GM10248 (cell line): ENCODE measurements at regions of chr14 and their contacts with region 1.

Region 1: GRCh38 chr14:100056964-100057795 is 8.0 kb upstream of the EVL start:
- DNase-seq: peak; percentile 69
- CTCF ChIP-seq: peak; percentile 49

Region 2: GRCh38 chr14:100045642-100046312 is 11.4 kb before region 1 on chr14:
- CTCF ChIA-PET with region 1: interaction called, 10 read pairs
- POLR2A ChIA-PET with region 1: no interaction called
- DNase-seq: no peak
- CTCF ChIP-seq: no peak

Region 3: DNA sequence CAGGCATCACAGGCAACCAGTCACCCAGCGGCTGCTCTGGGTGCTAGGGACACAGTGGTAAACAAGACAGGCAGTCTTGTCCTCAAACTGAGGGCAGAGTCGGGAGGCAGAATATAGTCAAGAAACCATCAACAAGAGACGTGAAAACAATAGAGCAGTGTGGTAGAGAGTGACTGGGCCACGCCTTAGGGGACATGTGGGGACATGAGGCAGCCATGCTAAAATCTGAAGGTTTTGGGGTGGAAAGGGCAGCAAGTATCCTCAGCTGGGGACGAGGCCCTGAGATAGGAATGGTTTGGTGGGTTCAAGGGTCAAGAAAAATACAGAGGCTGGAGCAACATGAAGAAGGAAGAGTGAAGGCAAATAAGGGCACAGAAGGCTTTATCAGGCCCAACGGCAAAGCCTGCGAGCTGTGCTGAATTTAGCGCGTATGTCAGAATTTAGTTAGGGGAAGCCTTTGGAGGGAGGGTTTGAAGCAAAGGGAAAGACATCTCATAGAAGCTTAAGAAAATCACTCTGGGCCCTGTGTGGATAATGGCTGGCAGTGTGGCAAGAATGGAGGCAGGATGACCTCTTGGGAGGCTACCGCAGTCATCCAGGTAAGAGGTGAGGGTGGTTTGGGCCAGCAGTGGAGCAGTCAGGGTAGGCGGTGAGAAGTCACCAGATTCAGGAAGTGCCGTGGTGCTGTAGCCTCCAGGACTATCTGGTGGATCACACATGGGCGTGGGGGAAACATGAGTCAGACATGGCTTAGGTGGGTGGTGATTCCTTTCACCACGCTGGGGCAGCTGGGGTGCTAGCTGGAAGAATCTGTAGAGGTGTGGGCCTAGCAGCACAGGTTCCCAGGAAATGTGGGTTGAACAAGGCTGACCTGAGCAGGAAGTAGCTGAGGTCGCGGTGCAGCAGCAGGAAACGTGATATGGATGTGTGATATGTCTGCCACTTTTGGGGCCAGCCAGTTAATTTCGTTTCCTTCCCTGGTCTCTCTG is 11.1 kb after region 1 on chr14:
- CTCF ChIA-PET with region 1: interaction called, 70 read pairs
- POLR2A ChIA-PET with region 1: no interaction called
- DNase-seq: peak; percentile 32
- CTCF ChIP-seq: no peak

Region 4: DNA sequence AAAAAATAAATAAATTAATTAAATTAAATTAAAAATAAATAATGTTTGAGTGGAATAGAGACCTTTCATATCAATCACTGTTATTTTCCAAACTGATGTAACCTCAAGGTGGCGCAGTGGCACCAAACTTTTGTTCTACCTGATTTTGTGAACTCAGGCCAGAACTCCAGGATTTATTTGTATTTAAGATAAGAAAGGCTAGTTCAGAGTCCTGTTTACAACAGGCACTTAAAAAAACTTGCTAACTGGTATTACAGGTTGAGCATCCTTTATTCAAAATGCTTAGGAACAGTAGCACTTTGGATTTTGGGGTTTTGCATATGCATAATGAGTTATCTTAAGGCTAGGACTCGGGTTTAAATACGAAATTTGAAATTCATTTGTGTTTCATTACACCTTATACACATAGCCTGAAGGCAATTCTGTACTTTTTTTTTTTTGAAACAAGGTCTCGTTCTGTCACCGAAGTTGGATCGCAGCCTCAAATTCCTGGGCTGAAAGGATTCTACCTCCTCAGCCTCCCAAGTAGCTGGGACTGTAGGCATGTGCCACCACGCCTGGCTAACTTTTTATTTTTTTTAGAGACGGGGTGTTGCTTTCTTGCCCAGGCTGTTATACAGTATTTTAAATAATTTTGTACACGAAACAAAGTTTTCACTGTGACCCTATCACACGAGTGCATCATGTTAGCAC is 214.2 kb after region 1 on chr14:
- CTCF ChIA-PET with region 1: no interaction called
- POLR2A ChIA-PET with region 1: no interaction called
- DNase-seq: no peak
- CTCF ChIP-seq: no peak